ENCODE measurements at regions of chr15 and their contacts with region 1.

Region 1: GRCh38 chr15:40694688-40695468 is at the start of gene RAD51:
- DNase-seq: peak; percentile 96
- H3K4me3 Mint-ChIP-seq: peak within 1 kb of the TSS; percentile 91
- H3K27ac Mint-ChIP-seq: peak within 1 kb of the TSS; percentile 98
- H3K4me1 Mint-ChIP-seq: peaks cover 27% of the 10 kb centered on the region
- H3K27me3 Mint-ChIP-seq: no peaks in the 10 kb centered on the region
- total RNA-seq, gene RAD51: 67.1 to 70.0 TPM

Region 2: GRCh38 chr15:40405501-40406381 is 289.1 kb before region 1 on chr15 and contains the start of gene IVD:
- CTCF ChIA-PET with region 1: no interaction called
- POLR2A ChIA-PET with region 1: no interaction called
- intact Hi-C with region 1: loop called (anchors 10 kb)
- DNase-seq: peak; percentile 95
- H3K4me3 Mint-ChIP-seq: peak within 1 kb of the TSS; percentile 69
- H3K27ac Mint-ChIP-seq: peak within 1 kb of the TSS; percentile 65
- H3K4me1 Mint-ChIP-seq: peaks cover 49% of the 10 kb centered on the region
- H3K27me3 Mint-ChIP-seq: no peaks in the 10 kb centered on the region
- total RNA-seq, gene IVD: 37.3 to 38.7 TPM

Region 3: DNA sequence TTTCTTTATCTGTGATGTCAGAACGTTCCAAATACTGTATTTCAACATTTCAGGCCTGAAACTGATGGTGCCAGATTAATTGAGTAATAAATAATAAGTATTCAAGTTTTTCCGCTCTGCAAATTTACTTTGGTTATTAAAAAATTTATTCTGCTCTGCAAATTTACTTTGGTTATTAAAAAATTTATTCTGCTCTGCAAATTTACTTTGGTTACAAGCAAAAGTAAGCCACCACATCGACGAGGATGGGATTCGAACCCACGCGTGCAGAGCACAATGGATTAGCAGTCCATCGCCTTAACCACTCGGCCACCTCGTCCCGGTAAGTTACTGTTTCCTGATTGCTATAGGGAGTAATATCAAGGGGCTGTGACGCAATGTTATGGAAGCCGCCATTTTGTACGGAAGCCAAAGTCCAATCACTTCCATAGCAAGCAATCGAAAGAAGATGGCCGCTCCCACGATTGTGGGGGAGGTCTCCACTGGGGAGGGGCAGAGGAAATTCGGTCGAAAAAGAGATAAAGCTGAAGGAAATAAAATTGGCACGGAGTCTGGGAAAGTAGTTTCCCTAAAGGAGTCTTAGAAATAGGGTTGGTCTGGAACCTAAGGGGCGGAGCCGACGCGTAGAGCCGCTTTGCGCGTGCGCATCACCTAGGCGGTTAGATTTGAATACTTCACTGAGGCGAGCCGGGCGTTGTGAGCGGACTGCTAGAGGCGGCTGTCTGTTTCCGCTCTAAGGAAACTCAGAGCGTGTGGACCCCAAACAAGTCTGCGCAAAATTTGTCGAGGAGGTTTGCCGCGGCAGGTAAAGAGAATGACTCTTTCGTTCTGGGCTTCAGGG is 101.1 kb before region 1 on chr15 and contains the start of gene KNL1:
- CTCF ChIA-PET with region 1: interaction called, 4 read pairs
- POLR2A ChIA-PET with region 1: interaction called, 4 read pairs
- intact Hi-C with region 1: loop called (anchors 1 kb)
- DNase-seq: peak; percentile 95
- H3K4me3 Mint-ChIP-seq: peak within 1 kb of the TSS; percentile 98
- H3K27ac Mint-ChIP-seq: peak within 1 kb of the TSS; percentile 99
- H3K4me1 Mint-ChIP-seq: peaks cover 26% of the 10 kb centered on the region
- H3K27me3 Mint-ChIP-seq: peaks cover 10% of the 10 kb centered on the region
- total RNA-seq, gene KNL1: 32.8 to 33.1 TPM

Region 4: DNA sequence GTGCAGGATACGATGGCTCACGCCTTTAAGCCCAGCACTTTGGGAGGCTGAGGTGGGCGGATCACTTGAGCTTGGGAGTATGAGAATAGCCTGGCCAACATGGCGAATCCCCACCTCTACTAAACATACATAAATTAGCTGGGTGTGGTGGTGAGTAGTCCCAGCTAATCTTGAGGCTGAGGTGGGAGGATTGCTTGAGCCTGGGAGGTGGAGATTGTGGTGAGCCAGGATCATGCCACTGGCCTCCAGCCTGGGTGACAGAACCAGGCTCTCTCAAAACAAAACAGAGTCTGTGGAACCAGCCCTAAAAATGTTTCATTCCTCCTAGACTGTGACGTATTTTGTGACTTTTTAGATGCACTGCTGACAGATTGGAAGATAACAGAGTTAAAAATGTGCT is 34.2 kb before region 1 on chr15:
- CTCF ChIA-PET with region 1: no interaction called
- POLR2A ChIA-PET with region 1: no interaction called
- intact Hi-C with region 1: no loop called
- DNase-seq: peak; percentile 18
- H3K4me3 Mint-ChIP-seq: no peak overlapping the region
- H3K27ac Mint-ChIP-seq: no peak overlapping the region
- H3K4me1 Mint-ChIP-seq: no peaks in the 10 kb centered on the region
- H3K27me3 Mint-ChIP-seq: no peaks in the 10 kb centered on the region

Region 5: GRCh38 chr15:40722934-40723333 is 28.1 kb after region 1 on chr15:
- CTCF ChIA-PET with region 1: no interaction called
- POLR2A ChIA-PET with region 1: no interaction called
- intact Hi-C with region 1: loop called (anchors 2 kb)
- DNase-seq: no peak
- H3K4me3 Mint-ChIP-seq: no peak overlapping the region
- H3K27ac Mint-ChIP-seq: no peak overlapping the region
- H3K4me1 Mint-ChIP-seq: peaks cover 14% of the 10 kb centered on the region
- H3K27me3 Mint-ChIP-seq: no peaks in the 10 kb centered on the region

Region 6: GRCh38 chr15:40754883-40755811 is 60.3 kb after region 1 on chr15 and contains the start of gene RMDN3:
- CTCF ChIA-PET with region 1: interaction called, 3 read pairs
- POLR2A ChIA-PET with region 1: interaction called, 7 read pairs
- intact Hi-C with region 1: loop called (anchors 1 kb)
- DNase-seq: peak; percentile 96
- H3K4me3 Mint-ChIP-seq: peak within 1 kb of the TSS; percentile 90
- H3K27ac Mint-ChIP-seq: peak within 1 kb of the TSS; percentile 94
- H3K4me1 Mint-ChIP-seq: peaks cover 28% of the 10 kb centered on the region
- H3K27me3 Mint-ChIP-seq: no peaks in the 10 kb centered on the region
- total RNA-seq, gene RMDN3: 22.6 to 22.7 TPM

Region 7: DNA sequence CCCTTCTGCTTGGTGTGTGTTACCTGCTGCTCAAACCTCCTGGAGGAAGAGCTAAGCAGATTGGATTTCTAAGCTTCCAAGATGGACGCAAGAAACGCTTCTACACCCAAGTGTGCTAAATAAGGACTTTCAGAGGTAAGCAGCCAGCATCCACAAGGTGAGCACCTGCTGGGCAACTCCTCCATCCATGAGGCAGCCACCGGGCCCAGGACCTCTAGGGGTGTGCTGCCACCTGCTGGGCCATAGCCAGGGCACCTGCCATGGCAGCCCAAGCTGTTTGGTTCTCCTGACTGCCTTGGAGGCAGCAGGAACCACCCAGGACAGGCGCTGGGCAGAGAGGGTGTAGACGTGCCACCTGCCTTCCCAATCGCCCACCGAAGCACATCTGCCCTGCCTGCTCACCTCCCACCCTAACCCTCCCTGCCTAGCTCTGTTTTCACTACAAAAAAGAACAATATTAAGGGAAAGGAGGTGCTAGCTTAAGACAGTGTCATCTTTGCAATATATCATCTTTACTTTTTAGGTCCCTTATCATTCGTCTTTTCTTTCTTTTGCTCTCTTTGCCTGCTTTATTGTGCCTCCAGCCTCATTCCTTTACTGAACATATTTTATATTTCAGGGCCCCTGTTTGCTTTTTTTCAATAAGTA is 87.8 kb after region 1 on chr15:
- CTCF ChIA-PET with region 1: interaction called, 12 read pairs
- POLR2A ChIA-PET with region 1: interaction called, 3 read pairs
- intact Hi-C with region 1: no loop called
- DNase-seq: peak; percentile 87
- H3K4me3 Mint-ChIP-seq: no peak overlapping the region
- H3K27ac Mint-ChIP-seq: no peak overlapping the region
- H3K4me1 Mint-ChIP-seq: peaks cover 22% of the 10 kb centered on the region
- H3K27me3 Mint-ChIP-seq: no peaks in the 10 kb centered on the region

Region 8: DNA sequence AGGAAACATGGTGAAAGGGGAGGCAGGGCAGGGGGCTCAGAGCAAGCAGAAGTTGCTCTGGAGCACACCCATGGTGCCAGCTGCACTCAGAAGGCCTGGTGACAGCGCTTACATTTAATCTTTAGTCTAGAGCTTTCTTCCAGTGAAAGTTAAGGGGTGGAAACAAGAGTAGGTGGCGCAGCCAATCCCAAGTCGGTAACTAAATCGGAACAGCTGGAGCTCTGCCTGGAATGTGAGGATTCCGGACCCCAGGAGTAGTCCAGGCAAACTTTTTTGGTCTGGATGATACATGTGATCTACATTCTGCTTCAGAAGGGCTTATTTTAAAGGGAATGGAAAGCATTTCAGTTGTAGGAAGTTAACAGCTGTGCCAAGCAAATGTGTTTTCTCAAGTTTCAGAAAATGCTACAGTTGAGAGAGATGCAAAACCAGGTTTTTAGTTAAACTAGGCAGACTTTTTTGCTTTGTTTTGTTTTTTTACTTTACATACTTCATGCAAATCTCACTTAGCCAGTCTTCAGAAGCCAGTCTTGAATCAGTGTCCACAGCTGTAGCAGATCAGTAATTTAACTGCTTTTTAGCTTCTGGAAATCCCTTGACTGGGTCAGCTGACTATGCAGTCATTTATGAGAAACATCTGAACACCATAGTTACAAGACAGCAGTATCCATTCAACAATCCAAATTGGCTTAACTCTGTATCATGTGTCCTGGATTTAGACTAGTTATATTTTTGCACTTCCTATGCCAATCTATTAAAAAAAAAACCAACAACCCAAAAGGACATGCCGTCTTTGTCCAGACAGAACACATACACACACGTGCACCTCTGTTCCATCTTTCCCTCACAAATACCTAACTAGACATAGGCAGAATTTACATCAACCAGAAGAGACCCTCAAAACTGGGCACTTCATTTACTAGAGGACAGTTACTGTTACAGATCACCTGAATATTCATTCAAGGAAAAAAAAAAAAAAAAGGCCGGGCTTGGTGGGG is 1762.9 kb after region 1 on chr15:
- CTCF ChIA-PET with region 1: no interaction called
- POLR2A ChIA-PET with region 1: no interaction called
- intact Hi-C with region 1: no loop called
- DNase-seq: no peak
- H3K4me3 Mint-ChIP-seq: no peak overlapping the region
- H3K27ac Mint-ChIP-seq: no peak overlapping the region
- H3K4me1 Mint-ChIP-seq: peaks cover 5% of the 10 kb centered on the region
- H3K27me3 Mint-ChIP-seq: no peaks in the 10 kb centered on the region

Measured in activated CD4-positive, alpha-beta memory T cell treated with anti-CD3 and anti-CD28 coated beads for 36 hours (primary cell).